ENCODE measurements at regions of chr10 and their contacts with region 1.

Region 1: GRCh38 chr10:52215745-52216361 is 98.2 kb upstream of the DKK1 start:
- DNase-seq: peak; percentile 79
- H3K4me3 Mint-ChIP-seq: no peak overlapping the region
- H3K27ac Mint-ChIP-seq: no peak overlapping the region
- H3K4me1 Mint-ChIP-seq: no peaks in the 10 kb centered on the region
- H3K27me3 Mint-ChIP-seq: no peaks in the 10 kb centered on the region
- CTCF ChIP-seq: peak; percentile 74

Region 2: DNA sequence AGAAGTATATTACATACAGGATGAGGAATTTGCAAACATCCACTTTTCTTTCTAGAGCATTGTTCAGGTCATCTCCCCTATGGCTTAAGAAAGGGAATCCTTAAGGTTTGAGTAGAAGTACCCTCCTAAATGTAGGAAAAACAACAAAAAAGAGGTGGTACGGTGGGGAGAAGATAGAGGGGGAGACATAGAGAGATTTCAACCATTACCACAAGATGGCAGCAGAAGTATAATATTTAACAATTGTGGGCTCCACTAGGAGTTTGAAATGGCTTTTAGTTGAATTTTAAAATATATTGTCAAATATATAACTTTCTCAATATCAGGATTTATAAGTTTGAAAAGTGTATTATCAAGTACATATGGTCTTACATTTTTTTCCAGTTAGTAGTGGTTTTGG is 1214.3 kb before region 1 on chr10:
- CTCF ChIA-PET with region 1: interaction called, 5 read pairs
- POLR2A ChIA-PET with region 1: no interaction called
- intact Hi-C with region 1: loop called (anchors 1 kb)
- DNase-seq: peak; percentile 32
- H3K4me3 Mint-ChIP-seq: no peak overlapping the region
- H3K27ac Mint-ChIP-seq: no peak overlapping the region
- H3K4me1 Mint-ChIP-seq: no peaks in the 10 kb centered on the region
- H3K27me3 Mint-ChIP-seq: peaks cover 67% of the 10 kb centered on the region
- CTCF ChIP-seq: peak; percentile 46

Region 3: DNA sequence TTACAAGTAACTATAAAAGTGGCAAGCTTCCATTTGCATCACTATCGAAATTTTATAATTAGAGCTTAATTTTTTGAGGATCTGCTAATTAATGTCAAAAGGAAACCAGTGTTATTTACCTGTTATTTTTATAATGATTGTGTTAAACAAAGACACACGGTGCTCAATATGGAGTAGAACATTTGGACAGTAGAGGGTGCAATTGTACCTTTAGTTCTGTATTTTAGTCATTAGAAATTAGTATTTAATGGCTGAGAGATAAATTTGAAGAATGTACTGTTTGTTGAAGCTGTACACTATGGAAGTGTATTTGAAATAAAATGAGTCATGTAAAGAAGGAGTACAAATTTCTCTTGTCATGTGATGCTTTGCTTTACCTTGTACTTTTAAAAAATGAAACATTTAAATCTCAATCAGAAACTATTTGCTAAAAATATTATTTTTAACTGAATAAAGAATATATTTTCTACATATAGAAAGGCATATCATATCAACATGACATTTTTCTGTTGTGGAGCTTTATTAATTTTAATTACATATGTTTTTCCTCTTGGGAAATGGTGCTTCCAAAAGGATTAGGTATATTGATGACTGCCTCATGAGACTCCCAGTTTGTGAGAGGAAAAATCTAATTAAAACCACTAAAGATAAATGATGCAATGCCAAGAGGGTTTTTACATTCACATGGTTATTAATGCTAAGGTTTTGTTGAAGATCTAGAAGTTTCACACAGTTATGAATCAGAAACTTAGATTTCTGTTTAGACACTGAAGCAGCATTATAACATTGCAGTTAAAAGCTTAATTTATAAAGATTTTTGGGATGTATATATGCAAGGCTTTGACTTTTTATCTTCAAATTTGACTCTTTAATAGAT is 1152.0 kb before region 1 on chr10:
- CTCF ChIA-PET with region 1: interaction called, 15 read pairs
- POLR2A ChIA-PET with region 1: no interaction called
- intact Hi-C with region 1: loop called (anchors 5 kb)
- DNase-seq: peak; percentile 30
- H3K4me3 Mint-ChIP-seq: no peak overlapping the region
- H3K27ac Mint-ChIP-seq: no peak overlapping the region
- H3K4me1 Mint-ChIP-seq: no peaks in the 10 kb centered on the region
- H3K27me3 Mint-ChIP-seq: peaks cover 60% of the 10 kb centered on the region
- CTCF ChIP-seq: peak; percentile 54

Region 4: DNA sequence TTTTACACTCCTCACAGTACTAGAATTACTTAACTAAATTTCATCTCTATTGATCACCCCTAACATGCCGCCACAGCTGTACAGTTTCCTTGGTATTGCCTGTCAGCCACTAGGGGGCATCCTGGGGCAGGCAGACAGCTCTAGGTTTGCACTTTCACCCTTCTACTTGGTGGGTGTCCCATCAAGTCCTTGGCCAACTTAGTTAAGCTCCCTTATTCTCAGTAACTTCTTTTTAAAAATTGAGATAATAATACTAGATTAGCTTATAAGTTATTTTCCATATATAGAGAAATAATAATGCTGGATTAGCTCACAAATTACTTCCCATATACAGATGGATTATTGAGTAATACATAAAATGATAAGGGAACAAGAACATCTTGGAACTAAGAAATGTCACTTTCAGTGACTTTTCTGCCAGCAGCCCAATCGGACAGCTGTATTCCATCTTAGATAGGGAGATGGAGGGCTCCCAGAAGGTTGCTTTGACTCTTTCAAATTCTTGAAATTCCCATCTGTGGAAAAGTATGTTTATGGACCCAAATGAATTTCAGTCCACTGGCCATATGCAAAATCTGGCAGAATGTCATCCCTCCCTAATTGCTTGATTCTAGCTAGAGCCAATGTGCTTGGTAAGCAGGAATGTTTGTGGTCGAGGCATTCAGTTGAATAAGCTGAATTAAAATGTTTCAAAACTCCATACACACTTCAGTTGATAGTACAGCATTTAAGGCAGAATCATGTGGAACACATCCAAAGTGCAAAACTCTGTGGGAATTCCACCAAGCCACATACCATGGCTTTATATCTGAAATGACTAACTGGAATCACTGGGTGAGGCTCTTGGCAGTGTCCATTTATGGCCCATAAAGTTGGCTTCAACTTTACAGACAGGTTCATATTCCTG is 826.2 kb before region 1 on chr10:
- CTCF ChIA-PET with region 1: no interaction called
- POLR2A ChIA-PET with region 1: no interaction called
- intact Hi-C with region 1: loop called (anchors 5 kb)
- DNase-seq: peak; percentile 64
- H3K4me3 Mint-ChIP-seq: no peak overlapping the region
- H3K27ac Mint-ChIP-seq: no peak overlapping the region
- H3K4me1 Mint-ChIP-seq: peaks cover 19% of the 10 kb centered on the region
- H3K27me3 Mint-ChIP-seq: no peaks in the 10 kb centered on the region
- CTCF ChIP-seq: peak; percentile 72

Region 5: DNA sequence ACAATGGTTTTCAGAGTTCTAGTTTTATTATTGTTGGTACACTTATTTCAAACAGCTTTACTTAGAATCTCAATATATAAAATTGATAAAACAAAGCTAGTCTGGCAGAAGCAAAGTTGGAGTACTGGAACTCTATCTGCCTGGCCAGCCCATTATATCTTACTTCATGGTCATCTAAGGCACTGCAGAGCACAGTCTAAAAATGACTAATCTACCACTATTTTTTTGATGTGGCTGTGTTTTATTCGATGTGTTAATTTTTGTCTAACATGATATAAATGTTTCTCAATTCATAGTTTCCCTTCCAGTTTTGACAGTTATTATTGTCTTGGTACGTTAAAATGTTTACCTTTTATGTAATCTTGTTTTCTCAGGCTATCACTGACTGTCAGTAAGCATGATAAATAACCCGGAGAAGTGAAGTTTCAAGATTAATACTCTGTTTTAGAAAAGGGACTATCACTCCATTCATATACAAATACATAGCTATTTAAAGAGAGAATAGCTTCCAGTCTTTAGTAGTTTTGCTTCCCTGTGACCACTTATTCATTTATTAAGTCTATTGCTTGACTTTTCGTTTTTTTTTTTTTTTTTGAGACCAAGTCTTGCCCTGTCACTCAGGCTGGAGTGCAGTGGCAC is 455.8 kb before region 1 on chr10:
- CTCF ChIA-PET with region 1: no interaction called
- POLR2A ChIA-PET with region 1: no interaction called
- intact Hi-C with region 1: no loop called
- DNase-seq: no peak
- H3K4me3 Mint-ChIP-seq: no peak overlapping the region
- H3K27ac Mint-ChIP-seq: no peak overlapping the region
- H3K4me1 Mint-ChIP-seq: no peaks in the 10 kb centered on the region
- H3K27me3 Mint-ChIP-seq: no peaks in the 10 kb centered on the region
- CTCF ChIP-seq: no peak

Region 6: GRCh38 chr10:52226197-52226847 is 10.5 kb after region 1 on chr10:
- CTCF ChIA-PET with region 1: interaction called, 10 read pairs
- POLR2A ChIA-PET with region 1: no interaction called
- intact Hi-C with region 1: no loop called
- DNase-seq: peak; percentile 55
- H3K4me3 Mint-ChIP-seq: no peak overlapping the region
- H3K27ac Mint-ChIP-seq: no peak overlapping the region
- H3K4me1 Mint-ChIP-seq: no peaks in the 10 kb centered on the region
- H3K27me3 Mint-ChIP-seq: no peaks in the 10 kb centered on the region
- CTCF ChIP-seq: no peak